Ascending aorta (tissue), 2 donors: ENCODE measurements at regions of chr6 and their contacts with region 1.

Region 1: GRCh38 chr6:32894080-32895005 is 40.4 kb downstream of the PSMB9 start:
- DNase-seq: peak; percentile 67 to 94
- H3K4me3 ChIP-seq: peak overlapping the region; percentile 78 to 94
- H3K27ac ChIP-seq: peak overlapping the region; percentile 86 to 92
- H3K4me1 ChIP-seq: peaks cover 5 to 8% of the 10 kb centered on the region in 2 donors
- H3K27me3 ChIP-seq: no peaks in the 10 kb centered on the region
- CTCF ChIP-seq: no peak

Region 2: DNA sequence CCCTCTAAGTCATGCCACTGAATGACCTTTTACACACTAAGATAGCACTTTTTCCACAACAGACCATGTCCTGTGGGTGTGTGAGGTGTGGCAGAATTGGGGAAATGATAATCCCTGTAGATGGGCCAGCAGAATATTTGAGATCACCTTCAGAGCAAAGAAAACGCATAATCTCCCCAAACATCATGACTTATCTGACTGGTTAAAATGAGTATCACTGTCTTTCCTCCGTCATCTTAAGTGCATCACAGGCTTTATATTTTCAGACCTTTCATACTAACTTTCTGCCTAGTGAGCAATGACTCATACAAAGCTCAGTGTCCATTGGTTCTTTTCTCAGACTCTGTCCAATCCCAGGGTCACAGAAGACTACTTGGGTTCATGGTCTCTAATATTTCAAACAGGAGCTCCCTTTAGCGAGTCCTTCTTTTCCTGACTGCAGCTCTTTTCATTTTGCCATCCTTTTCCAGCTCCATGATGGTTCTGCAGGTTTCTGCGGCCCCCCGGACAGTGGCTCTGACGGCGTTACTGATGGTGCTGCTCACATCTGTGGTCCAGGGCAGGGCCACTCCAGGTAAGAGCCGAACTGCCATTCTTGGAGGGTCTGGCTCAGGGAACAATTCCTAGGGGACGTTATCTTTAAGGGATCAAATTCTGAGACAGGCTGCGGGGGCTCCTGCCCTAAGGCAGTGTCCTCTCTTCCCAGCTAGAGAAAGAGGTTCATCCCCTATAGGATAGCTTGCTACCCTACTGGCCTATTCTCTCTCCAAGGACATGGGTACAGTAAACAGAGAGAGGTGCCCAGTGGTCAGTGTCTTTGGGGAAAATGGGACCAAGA is 181.4 kb after region 1 on chr6 and contains the start of gene HLA-DPB1:
- intact Hi-C with region 1: loop called (anchors 10 kb)
- DNase-seq: no peak
- H3K4me3 ChIP-seq: peak within 1 kb of the TSS; percentile 30 to 55
- H3K27ac ChIP-seq: peak within 1 kb of the TSS; percentile 46 to 67
- H3K4me1 ChIP-seq: no peaks in the 10 kb centered on the region
- H3K27me3 ChIP-seq: no peaks in the 10 kb centered on the region
- CTCF ChIP-seq: no peak
- total RNA-seq, gene HLA-DPB1: 72.7 TPM